ENCODE measurements at regions of chr1 and their contacts with region 1.

Region 1: DNA sequence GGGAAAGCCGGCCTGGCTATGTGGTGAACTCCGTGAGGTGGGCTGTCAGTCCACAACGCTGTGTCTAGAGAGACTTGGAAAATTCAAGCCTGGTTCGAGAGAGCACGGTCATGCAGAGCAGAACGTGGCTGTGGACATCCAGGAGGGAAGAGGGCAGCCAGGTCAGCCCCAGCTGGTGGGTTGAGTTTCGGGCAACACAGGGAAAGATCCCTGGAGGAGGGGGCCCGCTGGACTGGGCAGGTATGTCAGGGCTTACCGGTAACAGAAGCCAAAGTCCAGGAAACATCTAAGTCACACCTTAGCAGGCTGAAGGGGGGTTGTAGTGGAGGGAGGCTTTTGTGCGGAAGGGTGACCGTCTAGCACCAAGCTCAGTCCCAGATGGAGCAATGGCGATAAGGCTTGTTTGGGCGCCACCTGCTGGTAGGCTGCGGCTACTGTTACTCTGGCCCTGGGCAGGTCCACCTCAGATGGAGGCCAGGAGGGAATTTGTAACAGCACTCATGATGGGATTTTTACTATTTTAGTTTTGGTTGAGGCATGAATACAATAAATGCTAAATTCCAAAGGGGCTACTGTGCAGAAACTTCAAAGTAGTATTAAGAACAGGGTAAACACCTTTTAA is 143.3 kb upstream of the ZNF644 start:
- DNase-seq: peak; percentile 29 to 49 (median 43)
- H3K4me3 ChIP-seq: no peak overlapping the region
- H3K4me3 Mint-ChIP-seq: no peak overlapping the region
- H3K27ac ChIP-seq: no peak overlapping the region
- H3K27ac Mint-ChIP-seq: peak overlapping the region in 1 of 7 donors; percentile 51
- H3K4me1 ChIP-seq: no peaks in the 10 kb centered on the region
- H3K4me1 Mint-ChIP-seq: peaks cover 0 to 12% (median 1%) of the 10 kb centered on the region in 4 donors
- H3K27me3 ChIP-seq: no peaks in the 10 kb centered on the region
- H3K27me3 Mint-ChIP-seq: no peaks in the 10 kb centered on the region

Region 2: GRCh38 chr1:90045853-90046563 is 1119.1 kb before region 1 on chr1:
- CTCF ChIA-PET with region 1: interaction called, 7 read pairs
- POLR2A ChIA-PET with region 1: no interaction called
- intact Hi-C with region 1: loop called (anchors 10 kb)
- DNase-seq: peak in 2 of 5 donors; percentile 11 to 12
- H3K4me3 ChIP-seq: no peak overlapping the region
- H3K4me3 Mint-ChIP-seq: no peak overlapping the region
- H3K27ac ChIP-seq: no peak overlapping the region
- H3K27ac Mint-ChIP-seq: no peak overlapping the region
- H3K4me1 ChIP-seq: no peaks in the 10 kb centered on the region
- H3K4me1 Mint-ChIP-seq: no peaks in the 10 kb centered on the region
- H3K27me3 ChIP-seq: no peaks in the 10 kb centered on the region
- H3K27me3 Mint-ChIP-seq: peaks cover 1 to 8% of the 10 kb centered on the region in 2 donors

Region 3: DNA sequence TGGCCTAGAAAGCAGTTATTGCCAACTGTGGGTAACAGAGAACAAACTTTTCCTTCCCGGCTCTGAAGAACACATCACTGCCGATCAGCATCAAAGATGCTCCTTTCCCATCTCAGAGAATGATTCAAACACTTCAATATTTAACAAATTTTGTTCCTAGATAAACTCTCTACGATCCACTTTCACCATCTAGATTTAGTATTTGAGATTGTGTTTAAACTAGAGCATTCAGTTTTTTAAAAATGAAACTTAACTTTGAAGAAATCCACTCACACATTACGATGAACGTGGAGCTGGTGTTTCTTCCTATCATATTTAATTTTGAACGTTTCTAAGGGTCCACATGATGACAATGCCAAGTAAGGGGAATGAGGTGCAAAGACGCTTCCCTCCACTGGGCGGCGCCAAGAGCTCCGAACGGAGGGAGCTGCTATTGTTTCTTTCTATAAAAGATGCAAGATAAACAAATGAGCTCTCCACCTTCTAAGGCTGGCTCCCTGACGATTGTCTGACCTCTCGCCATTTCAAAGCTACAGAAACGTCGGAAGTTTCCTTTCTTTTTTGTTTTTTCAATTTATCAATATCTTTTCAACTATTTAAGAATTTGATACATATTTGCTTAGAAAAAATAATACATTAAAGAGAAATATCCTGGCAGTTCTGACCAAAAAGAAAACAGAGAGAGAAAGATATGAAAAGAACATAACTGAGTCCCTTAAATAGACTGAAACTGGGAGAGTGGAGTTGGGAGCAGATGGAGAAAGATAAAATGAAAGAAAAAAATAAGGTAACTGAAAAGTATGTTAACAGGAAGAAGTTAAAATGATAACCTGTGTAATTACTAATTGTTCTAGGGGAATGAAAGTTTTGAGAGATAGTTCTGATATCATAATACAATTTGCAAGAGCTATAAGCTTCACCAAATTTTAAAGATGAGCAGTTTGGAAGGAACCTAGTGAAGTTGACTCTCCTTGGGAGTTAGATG is 443.6 kb before region 1 on chr1:
- CTCF ChIA-PET with region 1: interaction called, 15 read pairs
- POLR2A ChIA-PET with region 1: no interaction called
- intact Hi-C with region 1: no loop called
- DNase-seq: peak in 1 of 5 donors; percentile 48
- H3K4me3 ChIP-seq: no peak overlapping the region
- H3K4me3 Mint-ChIP-seq: peak overlapping the region in 5 of 8 donors; percentile 30 to 57 (median 36)
- H3K27ac ChIP-seq: no peak overlapping the region
- H3K27ac Mint-ChIP-seq: peak overlapping the region in 3 of 7 donors; percentile 65 to 66 (median 66)
- H3K4me1 ChIP-seq: peaks cover 36% of the 10 kb centered on the region
- H3K4me1 Mint-ChIP-seq: peaks cover 26 to 64% (median 42%) of the 10 kb centered on the region in 4 donors
- H3K27me3 ChIP-seq: peaks cover 77% of the 10 kb centered on the region
- H3K27me3 Mint-ChIP-seq: peaks cover 73 to 77% of the 10 kb centered on the region in 2 donors

Region 4: GRCh38 chr1:91021686-91022517 is 143.2 kb before region 1 on chr1 and contains the start of gene ZNF644:
- CTCF ChIA-PET with region 1: interaction called, 15 read pairs
- POLR2A ChIA-PET with region 1: no interaction called
- intact Hi-C with region 1: loop called (anchors 5 kb)
- DNase-seq: peak; percentile 92 to 98 (median 94)
- H3K4me3 ChIP-seq: peak within 1 kb of the TSS; percentile 57 to 88
- H3K4me3 Mint-ChIP-seq: peak within 1 kb of the TSS; percentile 88 to 96 (median 95)
- H3K27ac ChIP-seq: peak within 1 kb of the TSS; percentile 99
- H3K27ac Mint-ChIP-seq: peak within 1 kb of the TSS; percentile 84 to 99 (median 98)
- H3K4me1 ChIP-seq: peaks cover 56% of the 10 kb centered on the region
- H3K4me1 Mint-ChIP-seq: peaks cover 35 to 72% (median 54%) of the 10 kb centered on the region in 4 donors
- H3K27me3 ChIP-seq: no peaks in the 10 kb centered on the region
- H3K27me3 Mint-ChIP-seq: no peaks in the 10 kb centered on the region
- total RNA-seq, gene ZNF644: 72.7 to 76.3 TPM

Region 5: GRCh38 chr1:91038582-91038981 is 126.6 kb before region 1 on chr1:
- CTCF ChIA-PET with region 1: no interaction called
- POLR2A ChIA-PET with region 1: no interaction called
- intact Hi-C with region 1: no loop called
- DNase-seq: no peak
- H3K4me3 ChIP-seq: no peak overlapping the region
- H3K4me3 Mint-ChIP-seq: no peak overlapping the region
- H3K27ac ChIP-seq: no peak overlapping the region
- H3K27ac Mint-ChIP-seq: no peak overlapping the region
- H3K4me1 ChIP-seq: no peaks in the 10 kb centered on the region
- H3K4me1 Mint-ChIP-seq: no peaks in the 10 kb centered on the region
- H3K27me3 ChIP-seq: no peaks in the 10 kb centered on the region
- H3K27me3 Mint-ChIP-seq: peaks cover 4 to 11% of the 10 kb centered on the region in 2 donors

Region 6: GRCh38 chr1:91151702-91152101 is 13.4 kb before region 1 on chr1:
- CTCF ChIA-PET with region 1: interaction called, 47 read pairs
- POLR2A ChIA-PET with region 1: interaction called, 3 read pairs
- intact Hi-C with region 1: no loop called
- DNase-seq: no peak
- H3K4me3 ChIP-seq: no peak overlapping the region
- H3K4me3 Mint-ChIP-seq: no peak overlapping the region
- H3K27ac ChIP-seq: no peak overlapping the region
- H3K27ac Mint-ChIP-seq: no peak overlapping the region
- H3K4me1 ChIP-seq: no peaks in the 10 kb centered on the region
- H3K4me1 Mint-ChIP-seq: no peaks in the 10 kb centered on the region
- H3K27me3 ChIP-seq: no peaks in the 10 kb centered on the region
- H3K27me3 Mint-ChIP-seq: peaks cover 2 to 12% of the 10 kb centered on the region in 2 donors

Region 7: DNA sequence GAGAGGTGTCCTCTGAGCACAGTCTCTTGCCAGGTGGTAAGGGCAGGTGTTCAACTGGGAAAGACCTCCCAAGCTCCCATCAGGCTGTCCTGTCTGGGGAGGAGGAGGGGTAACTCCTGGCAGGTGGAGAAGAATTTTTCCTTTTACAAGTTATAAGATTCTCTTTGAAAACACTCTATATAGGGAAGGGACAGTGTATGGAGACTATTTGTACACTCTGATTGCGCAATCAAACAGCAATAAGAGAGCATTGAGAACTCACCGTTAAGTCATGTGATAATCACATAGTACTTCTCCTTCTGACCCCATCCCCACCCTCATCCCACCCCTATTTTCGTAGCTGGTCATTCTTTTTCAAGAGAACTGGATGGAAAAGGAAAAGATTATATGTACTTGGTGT is 36.0 kb after region 1 on chr1:
- CTCF ChIA-PET with region 1: interaction called, 15 read pairs
- POLR2A ChIA-PET with region 1: no interaction called
- intact Hi-C with region 1: no loop called
- DNase-seq: no peak
- H3K4me3 ChIP-seq: no peak overlapping the region
- H3K4me3 Mint-ChIP-seq: no peak overlapping the region
- H3K27ac ChIP-seq: no peak overlapping the region
- H3K27ac Mint-ChIP-seq: no peak overlapping the region
- H3K4me1 ChIP-seq: no peaks in the 10 kb centered on the region
- H3K4me1 Mint-ChIP-seq: no peaks in the 10 kb centered on the region
- H3K27me3 ChIP-seq: no peaks in the 10 kb centered on the region
- H3K27me3 Mint-ChIP-seq: peaks cover 4 to 19% of the 10 kb centered on the region in 2 donors

Region 8: GRCh38 chr1:91924146-91924545 is 759.0 kb after region 1 on chr1:
- CTCF ChIA-PET with region 1: interaction called, 19 read pairs
- POLR2A ChIA-PET with region 1: no interaction called
- intact Hi-C with region 1: no loop called
- DNase-seq: no peak
- H3K4me3 ChIP-seq: no peak overlapping the region
- H3K4me3 Mint-ChIP-seq: no peak overlapping the region
- H3K27ac ChIP-seq: no peak overlapping the region
- H3K27ac Mint-ChIP-seq: peak overlapping the region in 1 of 7 donors; percentile 42
- H3K4me1 ChIP-seq: no peaks in the 10 kb centered on the region
- H3K4me1 Mint-ChIP-seq: peaks cover 0 to 7% (median 5%) of the 10 kb centered on the region in 4 donors
- H3K27me3 ChIP-seq: no peaks in the 10 kb centered on the region
- H3K27me3 Mint-ChIP-seq: peaks cover 0 to 2% of the 10 kb centered on the region in 2 donors